Activated B cell treated with CpG ODN at 0.5 μM for 24 hours (primary cell): ENCODE measurements at regions of chr6 and their contacts with region 1.

Region 1: DNA sequence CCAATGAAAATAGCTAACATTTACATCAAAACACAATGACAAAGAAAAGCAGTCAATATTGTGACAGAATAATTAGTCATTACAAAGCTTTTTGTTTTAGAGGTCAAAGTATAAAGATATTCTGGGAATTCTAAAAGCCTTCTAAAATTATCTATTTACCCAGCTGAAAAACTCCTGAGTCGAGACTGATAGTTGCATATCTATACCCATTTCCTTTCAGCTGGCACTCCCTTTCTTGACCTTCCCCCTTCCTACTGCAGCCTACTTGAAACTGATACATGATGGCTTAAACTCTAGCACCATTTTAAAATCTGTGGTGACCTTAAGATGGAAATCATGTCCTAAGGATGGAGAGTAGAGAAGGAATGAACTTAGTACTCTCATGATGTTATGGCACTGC is 38.6 kb downstream of the LMBRD1 start:
- DNase-seq: no peak
- ATAC-seq: no peak
- H3K4me3 Mint-ChIP-seq: no peak overlapping the region
- H3K27ac Mint-ChIP-seq: peak overlapping the region; percentile 53
- H3K4me1 Mint-ChIP-seq: peaks cover 56% of the 10 kb centered on the region
- H3K27me3 Mint-ChIP-seq: no peaks in the 10 kb centered on the region
- CTCF ChIP-seq: no peak

Region 2: GRCh38 chr6:69768664-69769063 is 10.4 kb after region 1 on chr6:
- CTCF ChIA-PET with region 1: no interaction called
- POLR2A ChIA-PET with region 1: no interaction called
- intact Hi-C with region 1: loop called (anchors 2 kb)
- DNase-seq: no peak
- ATAC-seq: no peak
- H3K4me3 Mint-ChIP-seq: no peak overlapping the region
- H3K27ac Mint-ChIP-seq: no peak overlapping the region
- H3K4me1 Mint-ChIP-seq: peaks cover 55% of the 10 kb centered on the region
- H3K27me3 Mint-ChIP-seq: no peaks in the 10 kb centered on the region
- CTCF ChIP-seq: no peak

Region 3: DNA sequence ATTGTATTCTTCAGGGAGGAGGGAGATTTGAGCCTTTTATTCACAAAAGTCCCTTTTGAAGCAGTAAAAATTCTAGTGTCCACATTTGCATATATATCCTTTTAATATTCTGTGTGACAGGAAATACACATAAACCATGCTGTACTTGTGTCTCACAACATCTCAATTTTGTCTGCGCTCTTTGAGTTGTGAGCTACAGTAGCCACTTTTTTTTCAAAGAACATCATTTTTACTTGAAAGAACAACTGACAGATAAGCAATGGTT is 17.3 kb after region 1 on chr6:
- CTCF ChIA-PET with region 1: no interaction called
- POLR2A ChIA-PET with region 1: no interaction called
- intact Hi-C with region 1: loop called (anchors 2 kb)
- DNase-seq: no peak
- ATAC-seq: peak; percentile 28
- H3K4me3 Mint-ChIP-seq: peak overlapping the region; percentile 61
- H3K27ac Mint-ChIP-seq: no peak overlapping the region
- H3K4me1 Mint-ChIP-seq: peaks cover 78% of the 10 kb centered on the region
- H3K27me3 Mint-ChIP-seq: no peaks in the 10 kb centered on the region
- CTCF ChIP-seq: no peak

Region 4: DNA sequence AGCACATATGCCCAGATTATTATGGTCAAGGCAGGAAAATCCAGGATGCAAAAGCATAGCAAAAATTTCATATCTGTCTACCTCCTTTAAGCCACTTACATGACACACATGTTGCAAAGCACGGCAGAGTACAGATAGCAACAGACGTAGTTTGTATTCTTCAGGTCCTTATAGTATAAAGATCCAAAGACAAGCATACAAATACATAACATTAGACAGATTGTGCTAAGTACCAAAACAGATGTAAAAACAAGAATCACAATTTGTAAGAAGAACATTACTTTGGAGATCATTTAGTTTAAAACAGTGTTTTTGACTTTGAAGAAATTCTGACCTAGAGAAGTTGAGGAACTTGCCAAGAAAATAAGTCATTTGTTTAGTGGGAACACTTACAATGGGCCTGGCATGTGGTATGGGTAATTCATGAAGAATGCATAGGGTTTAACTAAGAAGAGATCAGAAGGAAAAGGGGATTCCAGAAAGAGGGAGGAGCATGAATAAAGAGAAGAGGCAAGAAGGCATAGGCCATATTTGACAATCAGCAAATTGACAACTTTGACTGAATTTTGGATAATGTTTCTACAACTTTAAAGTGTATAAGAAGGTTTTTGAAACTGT is 69.2 kb after region 1 on chr6:
- CTCF ChIA-PET with region 1: no interaction called
- POLR2A ChIA-PET with region 1: no interaction called
- intact Hi-C with region 1: no loop called
- DNase-seq: no peak
- ATAC-seq: no peak
- H3K4me3 Mint-ChIP-seq: no peak overlapping the region
- H3K27ac Mint-ChIP-seq: no peak overlapping the region
- H3K4me1 Mint-ChIP-seq: no peaks in the 10 kb centered on the region
- H3K27me3 Mint-ChIP-seq: no peaks in the 10 kb centered on the region
- CTCF ChIP-seq: no peak